Activated naive CD8-positive, alpha-beta T cell treated with anti-CD3 and anti-CD28 coated beads, Interleukin-2, amount 10 ng/mL, durations not matched to agents 7 days and 5 days (primary cell): ENCODE measurements at regions of chr16 and their contacts with region 1.

Region 1: DNA sequence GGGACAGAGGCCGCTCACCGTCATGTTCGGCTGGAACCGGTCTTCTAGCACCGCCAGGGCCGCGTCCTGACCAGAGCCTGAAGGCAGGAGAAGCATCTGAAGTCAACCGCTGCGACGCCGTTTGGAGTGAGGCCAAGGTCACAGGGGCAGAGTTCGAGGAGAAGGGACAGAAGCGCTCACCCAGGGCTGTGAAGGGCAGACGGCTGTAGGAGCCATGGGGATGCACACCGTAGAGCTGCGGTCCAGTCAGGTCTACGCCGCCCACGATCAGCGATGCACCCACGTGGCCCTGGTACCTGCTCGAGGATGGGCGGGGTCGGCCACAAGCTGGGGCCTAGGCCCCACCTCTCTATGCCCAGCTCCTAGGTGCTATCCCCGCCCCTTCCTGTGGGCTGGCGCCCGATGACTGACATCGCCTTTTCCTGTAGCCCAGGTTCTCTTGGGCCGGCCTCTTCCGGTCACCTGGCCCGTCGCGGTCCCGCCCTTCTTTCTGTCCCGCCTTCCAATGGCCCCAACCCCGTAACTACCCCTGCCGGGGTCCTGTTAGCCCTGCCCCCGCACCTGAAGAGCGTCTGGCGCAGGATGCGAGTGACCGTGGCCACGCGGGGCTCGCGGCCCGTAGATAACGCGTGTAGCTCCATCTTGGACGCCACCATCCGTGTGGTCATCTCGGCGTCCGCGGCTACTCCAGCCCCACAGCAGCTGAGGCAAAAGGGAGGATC is 1.1 kb downstream of the PSMB10 start:
- DNase-seq: peak; percentile 90
- ATAC-seq: peak; percentile 84
- H3K4me3 Mint-ChIP-seq: peak overlapping the region; percentile 99
- H3K27ac Mint-ChIP-seq: peak overlapping the region; percentile 96
- H3K4me1 Mint-ChIP-seq: peaks cover 31% of the 10 kb centered on the region
- H3K27me3 Mint-ChIP-seq: no peaks in the 10 kb centered on the region

Region 2: GRCh38 chr16:67480833-67481560 is 454.6 kb before region 1 on chr16 and contains the start of gene ATP6V0D1:
- POLR2A ChIA-PET with region 1: interaction called, 10 read pairs
- DNase-seq: peak; percentile 100
- ATAC-seq: peak; percentile 89
- H3K4me3 Mint-ChIP-seq: peak within 1 kb of the TSS; percentile 93
- H3K27ac Mint-ChIP-seq: peak within 1 kb of the TSS; percentile 98
- H3K4me1 Mint-ChIP-seq: peaks cover 14% of the 10 kb centered on the region
- H3K27me3 Mint-ChIP-seq: no peaks in the 10 kb centered on the region
- total RNA-seq, gene ATP6V0D1: 41.8 to 48.8 TPM

Region 3: DNA sequence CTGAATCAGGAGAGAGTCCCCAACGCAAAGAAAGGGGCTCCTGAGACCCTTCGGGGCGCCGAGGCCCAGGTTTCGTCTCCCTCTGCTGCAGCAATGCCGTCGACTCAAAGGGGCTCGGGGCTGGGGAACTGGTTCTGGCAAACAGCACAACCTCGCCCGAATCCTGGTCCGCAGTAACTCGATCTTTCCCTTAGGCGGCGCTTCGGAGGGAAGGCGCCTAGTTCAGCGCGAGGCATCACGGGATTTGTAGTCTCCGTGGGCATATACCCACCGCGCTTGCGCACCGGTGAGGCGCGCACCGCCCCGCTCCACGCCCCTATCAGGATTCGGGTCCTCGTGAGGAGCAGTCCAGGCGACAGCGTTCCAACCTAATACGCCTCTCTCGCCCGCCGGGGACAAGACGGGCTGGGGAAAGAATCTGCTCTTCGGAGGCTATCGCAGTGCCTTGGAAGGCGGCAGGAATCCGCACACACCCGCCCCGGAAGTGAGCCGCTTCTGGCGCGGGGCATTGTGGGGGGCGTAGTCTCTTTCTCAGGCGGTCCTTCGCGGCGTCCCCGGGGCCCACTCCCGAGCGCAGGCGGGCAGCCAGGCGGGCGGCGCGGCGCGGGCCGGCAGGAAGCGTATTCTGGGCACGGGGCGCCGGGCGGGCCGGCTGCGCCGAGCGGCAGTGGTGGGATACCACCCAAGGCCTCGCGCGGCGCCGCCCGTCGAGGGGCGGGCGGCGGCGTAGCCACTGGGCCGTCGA is 93.6 kb before region 1 on chr16 and contains the start of gene THAP11:
- POLR2A ChIA-PET with region 1: interaction called, 16 read pairs
- DNase-seq: peak; percentile 95
- ATAC-seq: peak; percentile 51
- H3K4me3 Mint-ChIP-seq: peak within 1 kb of the TSS; percentile 95
- H3K27ac Mint-ChIP-seq: peak within 1 kb of the TSS; percentile 98
- H3K4me1 Mint-ChIP-seq: peaks cover 27% of the 10 kb centered on the region
- H3K27me3 Mint-ChIP-seq: no peaks in the 10 kb centered on the region
- total RNA-seq, gene THAP11: 48.1 to 50.1 TPM

Region 4: GRCh38 chr16:67865316-67865715 is 70.2 kb before region 1 on chr16:
- POLR2A ChIA-PET with region 1: no interaction called
- DNase-seq: no peak
- ATAC-seq: peak; percentile 54
- H3K4me3 Mint-ChIP-seq: no peak overlapping the region
- H3K27ac Mint-ChIP-seq: no peak overlapping the region
- H3K4me1 Mint-ChIP-seq: peaks cover 6% of the 10 kb centered on the region
- H3K27me3 Mint-ChIP-seq: no peaks in the 10 kb centered on the region

Region 5: GRCh38 chr16:67892899-67893742 is 42.4 kb before region 1 on chr16 and contains the start of gene PSKH1:
- POLR2A ChIA-PET with region 1: interaction called, 13 read pairs
- DNase-seq: peak; percentile 89
- ATAC-seq: peak; percentile 97
- H3K4me3 Mint-ChIP-seq: peak within 1 kb of the TSS; percentile 86
- H3K27ac Mint-ChIP-seq: peak within 1 kb of the TSS; percentile 96
- H3K4me1 Mint-ChIP-seq: peaks cover 18% of the 10 kb centered on the region
- H3K27me3 Mint-ChIP-seq: no peaks in the 10 kb centered on the region
- total RNA-seq, gene PSKH1: 22.8 to 25.6 TPM

Region 6: GRCh38 chr16:67957622-67958238 is 22.2 kb after region 1 on chr16:
- POLR2A ChIA-PET with region 1: no interaction called
- DNase-seq: no peak
- ATAC-seq: no peak
- H3K4me3 Mint-ChIP-seq: no peak overlapping the region
- H3K27ac Mint-ChIP-seq: no peak overlapping the region
- H3K4me1 Mint-ChIP-seq: no peaks in the 10 kb centered on the region
- H3K27me3 Mint-ChIP-seq: no peaks in the 10 kb centered on the region

Region 7: DNA sequence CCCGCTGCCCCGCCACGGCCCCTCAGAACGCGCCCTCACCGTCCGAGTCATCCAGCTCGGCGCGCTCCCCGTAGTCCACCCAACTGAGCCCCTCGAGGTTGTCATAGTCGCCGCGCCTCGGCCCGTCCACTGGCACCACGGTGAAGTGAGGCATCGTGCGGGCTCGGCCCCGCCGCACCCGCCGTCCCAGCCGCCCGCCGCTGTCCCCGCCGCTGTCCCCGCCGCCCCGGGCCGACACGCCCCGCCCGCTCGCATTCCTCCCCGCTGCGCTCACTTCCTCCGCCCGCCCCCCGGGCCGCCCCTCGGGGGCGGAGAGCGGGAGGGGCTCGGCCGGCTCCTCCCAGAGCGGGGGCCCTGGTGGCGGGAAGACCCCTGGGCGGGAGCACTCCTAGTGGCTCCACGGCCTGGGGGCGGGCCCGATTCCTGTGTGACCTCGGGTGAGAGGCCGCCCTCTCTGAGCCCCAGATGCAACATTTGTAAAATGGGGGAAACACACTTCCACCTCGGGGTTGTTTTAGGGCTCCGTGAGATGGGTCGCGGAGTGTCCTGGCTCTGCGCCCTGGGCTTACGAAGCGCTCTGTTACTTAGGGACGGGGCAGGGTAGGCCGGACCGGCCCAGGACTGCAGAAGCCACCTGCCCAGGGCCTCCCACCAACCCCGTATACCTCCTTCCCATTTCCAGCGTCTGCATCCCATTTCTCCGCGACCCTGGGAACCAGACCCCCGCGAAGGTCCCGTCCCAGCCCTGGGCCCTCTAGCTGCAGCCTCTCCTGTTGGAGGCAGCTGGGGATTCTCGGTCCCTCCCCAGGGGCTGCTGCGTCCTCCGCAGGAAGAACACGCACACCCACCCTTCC is 33.1 kb after region 1 on chr16 and contains the start of gene SLC12A4:
- POLR2A ChIA-PET with region 1: interaction called, 27 read pairs
- DNase-seq: peak; percentile 96
- ATAC-seq: peak; percentile 91
- H3K4me3 Mint-ChIP-seq: peak within 1 kb of the TSS; percentile 100
- H3K27ac Mint-ChIP-seq: peak within 1 kb of the TSS; percentile 99
- H3K4me1 Mint-ChIP-seq: peaks cover 22% of the 10 kb centered on the region
- H3K27me3 Mint-ChIP-seq: no peaks in the 10 kb centered on the region
- total RNA-seq, gene SLC12A4: 43.9 to 48.7 TPM

Region 8: DNA sequence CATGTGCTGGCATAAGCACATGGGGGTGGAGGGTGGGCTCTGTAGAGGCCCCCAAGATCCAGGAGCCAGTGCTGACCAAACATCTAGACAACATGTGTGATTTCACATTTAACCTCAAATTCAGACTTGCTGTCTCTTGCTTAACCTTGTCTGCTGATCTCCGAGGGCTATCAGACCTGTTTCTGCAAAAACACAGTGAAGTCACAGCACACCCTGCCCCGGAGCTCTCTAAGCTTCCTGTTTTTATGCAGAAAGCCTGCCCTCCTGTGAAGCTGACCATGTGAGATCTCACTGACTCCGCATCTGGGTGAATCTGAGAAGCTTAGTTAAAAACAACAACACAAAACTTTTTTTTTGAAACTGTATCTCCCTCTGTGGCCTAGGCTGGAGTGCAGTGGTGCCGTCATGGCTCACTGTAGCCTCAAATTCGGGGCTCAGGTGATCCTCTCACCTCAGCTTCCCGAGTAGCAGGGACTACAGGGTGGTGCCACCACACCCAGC is 70.3 kb after region 1 on chr16:
- POLR2A ChIA-PET with region 1: no interaction called
- DNase-seq: no peak
- ATAC-seq: peak; percentile 92
- H3K4me3 Mint-ChIP-seq: peak overlapping the region; percentile 4
- H3K27ac Mint-ChIP-seq: peak overlapping the region; percentile 81
- H3K4me1 Mint-ChIP-seq: peaks cover 12% of the 10 kb centered on the region
- H3K27me3 Mint-ChIP-seq: no peaks in the 10 kb centered on the region

Region 9: GRCh38 chr16:68064791-68065365 is 129.3 kb after region 1 on chr16:
- POLR2A ChIA-PET with region 1: interaction called, 11 read pairs
- DNase-seq: peak; percentile 77
- ATAC-seq: peak; percentile 62
- H3K4me3 Mint-ChIP-seq: peak overlapping the region; percentile 45
- H3K27ac Mint-ChIP-seq: peak overlapping the region; percentile 95
- H3K4me1 Mint-ChIP-seq: peaks cover 65% of the 10 kb centered on the region
- H3K27me3 Mint-ChIP-seq: no peaks in the 10 kb centered on the region